GM12878 (cell line): ENCODE measurements at regions of chr4 and their contacts with region 1.

Region 1: DNA sequence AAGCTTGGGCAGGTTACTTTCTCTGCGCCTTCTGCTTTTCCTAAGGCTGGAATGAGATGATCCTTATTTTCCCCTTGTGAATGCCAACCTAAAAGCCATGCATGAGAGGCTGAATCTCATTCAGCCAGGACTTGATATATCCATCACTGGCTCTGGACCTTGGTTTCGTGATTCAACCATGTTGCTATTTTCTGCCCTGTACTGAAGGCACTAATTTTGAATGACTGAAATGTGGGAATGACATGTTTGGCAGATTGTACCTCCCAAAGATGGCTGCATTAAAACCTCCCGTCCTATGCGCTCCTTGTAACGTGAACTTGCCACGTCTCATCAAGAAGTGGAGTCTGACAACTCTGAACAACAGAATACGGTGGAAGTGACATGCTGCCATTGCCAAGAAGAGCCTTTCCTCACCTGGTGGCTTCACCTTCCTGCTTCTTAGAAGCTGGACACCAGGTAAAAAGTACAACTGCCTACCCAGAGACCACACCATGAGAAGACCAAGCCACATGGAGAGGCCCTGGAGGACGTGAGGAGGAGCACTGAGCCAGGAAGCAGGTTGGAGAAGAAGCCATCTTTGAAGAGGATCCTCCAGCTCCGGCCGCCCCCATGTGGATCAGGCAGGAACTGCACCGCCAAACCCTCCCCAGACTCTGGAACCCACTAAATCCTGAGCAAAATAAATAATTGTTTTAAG is 174.5 kb downstream of the NSUN7 start:
- DNase-seq: peak; percentile 12
- ATAC-seq: peak; percentile 94
- H3K4me3 ChIP-seq: no peak overlapping the region
- H3K27ac ChIP-seq: no peak overlapping the region; the same call in 1 of the 2 replicates
- H3K4me1 ChIP-seq: no peaks in the 10 kb centered on the region
- H3K27me3 ChIP-seq: no peaks in the 10 kb centered on the region
- CTCF ChIP-seq: peak; percentile 76 to 95 (median 90)
- EP300 ChIP-seq: no peak
- POLR2A ChIP-seq: no peak
- RAD21 ChIP-seq: peak; percentile 57

Region 2: GRCh38 chr4:40736910-40737309 is 187.3 kb before region 1 on chr4:
- CTCF ChIA-PET with region 1: interaction called, 53 read pairs
- POLR2A ChIA-PET with region 1: interaction called, 3 read pairs
- RAD21 ChIA-PET with region 1: interaction called, 17 read pairs
- SMC1A ChIA-PET with region 1: interaction called, 11 read pairs
- in situ Hi-C with region 1: no loop called
- intact Hi-C with region 1: no loop called
- DNase-seq: no peak
- ATAC-seq: peak; percentile 84
- H3K4me3 ChIP-seq: no peak overlapping the region
- H3K27ac ChIP-seq: no peak overlapping the region
- H3K4me1 ChIP-seq: no peaks in the 10 kb centered on the region
- H3K27me3 ChIP-seq: no peaks in the 10 kb centered on the region
- CTCF ChIP-seq: peak; percentile 43 to 68 (median 47); a peak in 5 of 6 replicates
- EP300 ChIP-seq: no peak
- POLR2A ChIP-seq: no peak
- RAD21 ChIP-seq: peak; percentile 94

Region 3: GRCh38 chr4:40908702-40909362 is 15.4 kb before region 1 on chr4:
- CTCF ChIA-PET with region 1: interaction called, 190 read pairs
- POLR2A ChIA-PET with region 1: interaction called, 3 read pairs
- RAD21 ChIA-PET with region 1: interaction called, 10 read pairs
- SMC1A ChIA-PET with region 1: interaction called, 13 read pairs
- in situ Hi-C with region 1: no loop called
- intact Hi-C with region 1: no loop called
- DNase-seq: peak; percentile 40
- ATAC-seq: peak; percentile 99
- H3K4me3 ChIP-seq: no peak overlapping the region
- H3K27ac ChIP-seq: no peak overlapping the region
- H3K4me1 ChIP-seq: peaks cover 4% of the 10 kb centered on the region; the same call in 1 of the 2 replicates
- H3K27me3 ChIP-seq: no peaks in the 10 kb centered on the region
- CTCF ChIP-seq: peak; percentile 92 to 97 (median 93)
- EP300 ChIP-seq: no peak
- POLR2A ChIP-seq: no peak
- RAD21 ChIP-seq: peak; percentile 82

Region 4: DNA sequence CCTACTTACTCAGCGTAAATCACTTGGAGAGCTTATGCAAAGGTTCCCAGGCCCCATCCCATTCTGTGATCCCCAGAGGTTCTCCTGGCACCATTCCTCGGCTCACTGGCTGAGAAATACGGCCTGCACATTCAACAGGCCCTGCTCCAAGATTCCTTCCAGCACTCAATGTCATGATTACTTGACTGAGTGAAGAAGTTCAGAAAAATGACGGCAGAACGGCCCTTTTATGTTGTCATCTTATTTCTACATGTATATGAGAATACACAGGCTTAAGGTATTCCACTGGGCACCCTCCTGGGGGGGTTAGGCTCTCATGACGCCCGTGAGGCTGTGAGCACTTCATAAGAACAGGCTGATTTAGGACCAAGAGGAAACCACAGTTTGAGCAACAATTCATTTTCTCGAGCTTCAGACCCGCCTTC is 16.1 kb after region 1 on chr4:
- CTCF ChIA-PET with region 1: interaction called, 75 read pairs
- POLR2A ChIA-PET with region 1: interaction called, 4 read pairs
- RAD21 ChIA-PET with region 1: no interaction called
- SMC1A ChIA-PET with region 1: interaction called, 5 read pairs
- in situ Hi-C with region 1: no loop called
- intact Hi-C with region 1: no loop called
- DNase-seq: no peak
- ATAC-seq: no peak
- H3K4me3 ChIP-seq: no peak overlapping the region
- H3K27ac ChIP-seq: no peak overlapping the region
- H3K4me1 ChIP-seq: no peaks in the 10 kb centered on the region
- H3K27me3 ChIP-seq: no peaks in the 10 kb centered on the region; a peak in 1 of 4 replicates
- CTCF ChIP-seq: no peak
- EP300 ChIP-seq: no peak
- POLR2A ChIP-seq: no peak
- RAD21 ChIP-seq: no peak